Endothelial cell of umbilical vein (primary cell): ENCODE measurements at regions of chr5 and their contacts with region 1.

Region 1: GRCh38 chr5:173925448-173926071 is 37.4 kb downstream of the CPEB4 start:
- DNase-seq: peak; percentile 70
- H3K4me3 ChIP-seq: no peak overlapping the region
- H3K27ac ChIP-seq: no peak overlapping the region
- H3K4me1 ChIP-seq: peaks cover 15% of the 10 kb centered on the region
- H3K27me3 ChIP-seq: no peaks in the 10 kb centered on the region
- CTCF ChIP-seq: peak; percentile 48 to 57
- POLR2A ChIP-seq: no peak

Region 2: GRCh38 chr5:173625696-173626504 is 299.7 kb before region 1 on chr5:
- CTCF ChIA-PET with region 1: interaction called, 41 read pairs
- POLR2A ChIA-PET with region 1: no interaction called
- dilution Hi-C with region 1: no loop called
- intact Hi-C with region 1: no loop called
- DNase-seq: no peak
- H3K4me3 ChIP-seq: no peak overlapping the region
- H3K27ac ChIP-seq: no peak overlapping the region
- H3K4me1 ChIP-seq: no peaks in the 10 kb centered on the region
- H3K27me3 ChIP-seq: peaks cover 3 to 5% of the 10 kb centered on the region in 2 experiments
- CTCF ChIP-seq: no peak
- POLR2A ChIP-seq: no peak

Region 3: DNA sequence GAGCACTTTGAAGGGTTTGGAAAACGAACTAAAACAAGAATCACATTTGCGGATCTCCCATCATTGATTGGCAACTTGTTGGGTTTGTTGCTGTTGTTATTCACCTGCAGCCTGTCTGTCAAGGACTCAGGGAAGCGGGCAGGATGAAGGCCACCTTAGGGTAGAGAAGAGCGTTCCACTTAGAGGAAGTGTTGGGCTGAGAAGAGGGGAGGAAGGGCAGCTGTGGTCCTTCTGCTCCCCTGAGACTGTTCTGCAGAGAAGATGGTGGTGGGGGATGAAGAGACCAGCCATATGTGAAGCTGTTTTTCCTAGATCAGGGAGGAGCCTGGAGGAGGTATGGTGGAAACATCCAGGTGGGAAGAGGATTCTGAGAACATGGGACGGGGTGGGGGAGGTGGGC is 108.0 kb before region 1 on chr5:
- CTCF ChIA-PET with region 1: no interaction called
- POLR2A ChIA-PET with region 1: no interaction called
- dilution Hi-C with region 1: no loop called
- intact Hi-C with region 1: no loop called
- DNase-seq: no peak
- H3K4me3 ChIP-seq: no peak overlapping the region
- H3K27ac ChIP-seq: no peak overlapping the region
- H3K4me1 ChIP-seq: no peaks in the 10 kb centered on the region
- H3K27me3 ChIP-seq: no peaks in the 10 kb centered on the region
- CTCF ChIP-seq: no peak
- POLR2A ChIP-seq: no peak

Region 4: GRCh38 chr5:173887610-173888472 is 37.7 kb before region 1 on chr5 and contains the start of gene CPEB4:
- CTCF ChIA-PET with region 1: interaction called, 70 read pairs
- POLR2A ChIA-PET with region 1: interaction called, 3 read pairs
- dilution Hi-C with region 1: no loop called
- intact Hi-C with region 1: loop called (anchors 1 kb)
- DNase-seq: peak; percentile 99
- H3K4me3 ChIP-seq: peak within 1 kb of the TSS; percentile 76 to 84 (median 79)
- H3K27ac ChIP-seq: peak within 1 kb of the TSS; percentile 82
- H3K4me1 ChIP-seq: peaks cover 42% of the 10 kb centered on the region
- H3K27me3 ChIP-seq: no peaks in the 10 kb centered on the region
- CTCF ChIP-seq: no peak
- POLR2A ChIP-seq: peak; percentile 89
- total RNA-seq, gene CPEB4: 16.4 and 18.1 TPM in 2 replicates

Region 5: GRCh38 chr5:173907686-173908371 is 17.7 kb before region 1 on chr5:
- CTCF ChIA-PET with region 1: interaction called, 30 read pairs
- POLR2A ChIA-PET with region 1: no interaction called
- dilution Hi-C with region 1: no loop called
- intact Hi-C with region 1: no loop called
- DNase-seq: no peak
- H3K4me3 ChIP-seq: no peak overlapping the region
- H3K27ac ChIP-seq: no peak overlapping the region
- H3K4me1 ChIP-seq: peaks cover 9% of the 10 kb centered on the region
- H3K27me3 ChIP-seq: no peaks in the 10 kb centered on the region
- CTCF ChIP-seq: no peak
- POLR2A ChIP-seq: no peak

Region 6: GRCh38 chr5:173963867-173964441 is 38.4 kb after region 1 on chr5:
- CTCF ChIA-PET with region 1: interaction called, 13 read pairs
- POLR2A ChIA-PET with region 1: no interaction called
- dilution Hi-C with region 1: no loop called
- intact Hi-C with region 1: no loop called
- DNase-seq: no peak
- H3K4me3 ChIP-seq: no peak overlapping the region
- H3K27ac ChIP-seq: no peak overlapping the region
- H3K4me1 ChIP-seq: no peaks in the 10 kb centered on the region
- H3K27me3 ChIP-seq: no peaks in the 10 kb centered on the region
- CTCF ChIP-seq: no peak
- POLR2A ChIP-seq: no peak